SK-N-SH (cell line): ENCODE measurements at regions of chr19 and their contacts with region 1.

Region 1: DNA sequence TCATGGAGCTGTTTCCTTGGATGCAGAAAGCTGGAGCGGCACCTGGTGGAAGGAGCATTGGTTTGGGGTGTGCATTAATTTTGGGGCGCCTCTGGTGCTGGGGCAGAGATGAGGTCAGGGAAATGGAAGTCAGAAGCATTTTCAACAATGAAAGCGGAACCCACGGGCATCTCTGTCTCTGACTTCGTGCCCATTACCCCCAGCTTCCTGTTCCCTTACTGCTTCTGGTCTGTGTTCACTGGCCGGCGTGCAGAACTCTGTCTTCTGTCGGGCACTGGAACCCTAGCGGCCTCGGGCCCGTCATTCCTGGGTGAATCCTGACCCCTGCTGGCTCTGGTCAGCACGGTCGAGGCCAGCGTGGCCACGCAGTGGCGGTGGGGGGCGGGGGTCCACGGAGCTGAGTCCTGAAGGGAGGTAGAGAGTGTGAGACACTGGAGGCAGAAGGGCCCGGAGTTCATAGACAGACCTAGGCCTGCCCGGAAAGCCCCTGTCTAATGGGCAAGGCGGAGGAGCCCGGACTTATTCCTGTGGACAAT is 7.9 kb upstream of the LINGO3 start:
- DNase-seq: peak; percentile 95
- H3K4me3 ChIP-seq: no peak overlapping the region; a peak in 1 of 4 replicates
- H3K27ac ChIP-seq: no peak overlapping the region; a peak in 1 of 4 replicates
- H3K4me1 ChIP-seq: peaks cover 0 to 2% of the 10 kb centered on the region in 2 experiments; a peak in 1 of 4 replicates
- H3K27me3 ChIP-seq: no peaks in the 10 kb centered on the region
- CTCF ChIP-seq: peak; percentile 80
- EP300 ChIP-seq: no peak
- RAD21 ChIP-seq: peak; percentile 98

Region 2: GRCh38 chr19:2160379-2160778 is 155.5 kb before region 1 on chr19:
- CTCF ChIA-PET with region 1: interaction called, 54 read pairs
- POLR2A ChIA-PET with region 1: no interaction called
- DNase-seq: no peak
- H3K4me3 ChIP-seq: no peak overlapping the region
- H3K27ac ChIP-seq: 0 out of 4 replicates have a peak overlapping the region, but pooled peaks of 1 of the 2 experiments have one; percentile 87
- H3K4me1 ChIP-seq: peaks cover 0 to 4% of the 10 kb centered on the region in 2 experiments; a peak in 2 of 4 replicates
- H3K27me3 ChIP-seq: no peaks in the 10 kb centered on the region
- CTCF ChIP-seq: no peak
- EP300 ChIP-seq: no peak
- RAD21 ChIP-seq: no peak

Region 3: DNA sequence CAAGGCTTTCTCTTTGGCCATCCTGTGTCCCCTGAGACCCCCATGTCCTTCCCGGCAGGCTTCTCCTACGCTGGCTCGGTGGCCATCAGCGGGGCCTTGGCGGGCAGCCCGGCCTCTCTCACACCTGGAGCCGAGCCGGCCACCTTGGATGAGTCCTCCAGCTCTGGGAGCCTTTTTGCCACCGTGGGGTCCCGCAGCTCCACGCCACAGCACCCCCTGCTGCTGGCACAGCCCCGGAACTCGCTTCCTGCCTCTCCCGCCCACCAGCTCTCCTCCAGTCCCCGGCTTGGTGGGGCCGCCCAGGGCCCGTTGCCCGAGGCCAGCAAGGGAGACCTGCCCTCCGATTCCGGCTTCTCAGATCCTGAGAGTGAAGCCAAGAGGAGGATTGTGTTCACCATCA is 94.0 kb before region 1 on chr19:
- CTCF ChIA-PET with region 1: interaction called, 23 read pairs
- POLR2A ChIA-PET with region 1: no interaction called
- DNase-seq: peak; percentile 70
- H3K4me3 ChIP-seq: no peak overlapping the region
- H3K27ac ChIP-seq: peak overlapping the region in 1 of 2 experiments; percentile 44; a peak in 1 of 4 replicates
- H3K4me1 ChIP-seq: peaks cover 0 to 13% of the 10 kb centered on the region in 2 experiments; a peak in 1 of 4 replicates
- H3K27me3 ChIP-seq: no peaks in the 10 kb centered on the region
- CTCF ChIP-seq: peak; percentile 40
- EP300 ChIP-seq: no peak
- RAD21 ChIP-seq: peak; percentile 15; the same call in 1 of the 2 replicates

Region 4: GRCh38 chr19:2253106-2254053 is 62.5 kb before region 1 on chr19:
- CTCF ChIA-PET with region 1: interaction called, 15 read pairs
- POLR2A ChIA-PET with region 1: no interaction called
- DNase-seq: peak; percentile 58
- H3K4me3 ChIP-seq: no peak overlapping the region
- H3K27ac ChIP-seq: no peak overlapping the region; a peak in 1 of 4 replicates
- H3K4me1 ChIP-seq: peaks cover 0 to 17% of the 10 kb centered on the region in 2 experiments; a peak in 1 of 4 replicates
- H3K27me3 ChIP-seq: no peaks in the 10 kb centered on the region
- CTCF ChIP-seq: peak; percentile 39
- EP300 ChIP-seq: no peak
- RAD21 ChIP-seq: no peak

Region 5: GRCh38 chr19:2282062-2282861 is 33.6 kb before region 1 on chr19 and contains the start of gene PEAK3:
- CTCF ChIA-PET with region 1: interaction called, 284 read pairs
- POLR2A ChIA-PET with region 1: no interaction called
- DNase-seq: peak; percentile 80
- H3K4me3 ChIP-seq: peak within 1 kb of the TSS in 1 of 2 experiments; percentile 9; a peak in 1 of 4 replicates
- H3K27ac ChIP-seq: no peak within 1 kb of the TSS
- H3K4me1 ChIP-seq: peaks cover 0 to 8% of the 10 kb centered on the region in 2 experiments; a peak in 1 of 4 replicates
- H3K27me3 ChIP-seq: no peaks in the 10 kb centered on the region
- CTCF ChIP-seq: no peak
- EP300 ChIP-seq: no peak
- RAD21 ChIP-seq: no peak
- polyA plus RNA-seq, gene PEAK3: not detected in 2 replicates

Region 6: GRCh38 chr19:2328401-2329148 is 12.7 kb after region 1 on chr19 and contains the starts of genes LSM7 and SPPL2B:
- CTCF ChIA-PET with region 1: interaction called, 51 read pairs
- POLR2A ChIA-PET with region 1: no interaction called
- DNase-seq: peak; percentile 100
- H3K4me3 ChIP-seq: peak within 1 kb of the TSS; percentile 76 to 91
- H3K27ac ChIP-seq: peak within 1 kb of the TSS; percentile 67 to 84
- H3K4me1 ChIP-seq: peaks cover 6 to 14% of the 10 kb centered on the region in 2 experiments; a peak in 2 of 4 replicates
- H3K27me3 ChIP-seq: no peaks in the 10 kb centered on the region
- CTCF ChIP-seq: no peak
- EP300 ChIP-seq: no peak
- RAD21 ChIP-seq: no peak
- polyA plus RNA-seq, gene LSM7: 1,077 and 1,193 TPM in 2 replicates
- polyA plus RNA-seq, gene SPPL2B: 48.5 and 58.1 TPM in 2 replicates

Region 7: GRCh38 chr19:2345794-2346663 is 30.1 kb after region 1 on chr19:
- CTCF ChIA-PET with region 1: no interaction called
- POLR2A ChIA-PET with region 1: no interaction called
- DNase-seq: peak; percentile 75
- H3K4me3 ChIP-seq: no peak overlapping the region
- H3K27ac ChIP-seq: no peak overlapping the region
- H3K4me1 ChIP-seq: no peaks in the 10 kb centered on the region; a peak in 1 of 4 replicates
- H3K27me3 ChIP-seq: no peaks in the 10 kb centered on the region
- CTCF ChIP-seq: no peak
- EP300 ChIP-seq: no peak
- RAD21 ChIP-seq: no peak

Region 8: DNA sequence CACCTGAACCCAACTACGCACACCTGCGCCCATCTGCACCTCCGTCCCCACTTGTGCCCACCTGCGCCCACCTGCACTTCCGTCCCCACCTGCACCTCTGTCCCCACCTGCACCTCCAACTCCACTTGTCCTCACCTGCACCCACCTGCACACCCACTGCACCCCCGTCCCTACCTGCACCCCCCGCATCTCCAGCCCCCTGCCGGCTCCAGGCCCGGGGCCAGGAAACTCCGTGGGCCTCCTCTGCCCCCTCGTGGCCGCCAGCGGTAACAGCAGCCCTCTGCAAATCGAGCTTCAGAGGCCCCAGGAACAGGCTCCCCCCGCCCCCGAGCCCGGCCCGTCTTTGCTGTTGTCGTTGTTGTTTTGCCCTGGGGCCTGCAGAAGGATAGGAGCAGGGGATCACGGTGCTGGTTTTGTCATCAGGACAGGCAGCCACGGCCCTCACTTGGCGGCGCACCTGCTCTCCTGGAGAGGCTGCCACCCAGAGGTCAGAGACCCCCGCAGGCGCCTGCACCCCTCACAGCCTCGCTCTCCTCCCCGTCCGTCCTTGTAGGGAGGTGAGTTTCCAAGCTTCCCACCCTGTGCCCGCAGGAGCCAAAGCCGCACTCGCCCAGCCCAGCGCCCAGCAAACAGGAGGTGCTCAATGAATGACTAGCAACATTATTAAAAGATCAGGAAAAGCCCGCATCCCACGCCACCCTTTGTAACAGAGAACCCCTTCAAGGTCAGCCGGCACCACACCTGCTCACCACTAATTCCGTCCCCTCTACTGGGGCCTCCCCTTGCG is 321.2 kb after region 1 on chr19:
- CTCF ChIA-PET with region 1: no interaction called
- POLR2A ChIA-PET with region 1: no interaction called
- DNase-seq: peak; percentile 94
- H3K4me3 ChIP-seq: 0 out of 4 replicates have a peak overlapping the region, but pooled peaks of 1 of the 2 experiments have one; percentile 23
- H3K27ac ChIP-seq: no peak overlapping the region
- H3K4me1 ChIP-seq: peaks cover 0 to 3% of the 10 kb centered on the region in 2 experiments; a peak in 1 of 4 replicates
- H3K27me3 ChIP-seq: no peaks in the 10 kb centered on the region
- CTCF ChIP-seq: peak; percentile 79
- EP300 ChIP-seq: no peak
- RAD21 ChIP-seq: peak; percentile 66